ENCODE measurements at regions of chr14 and their contacts with region 1.

Region 1: GRCh38 chr14:21103710-21104447 is 3.0 kb downstream of the TMEM253 start:
- DNase-seq: peak; percentile 98
- H3K4me3 ChIP-seq: peak overlapping the region; percentile 53 to 72 (median 59)
- H3K27ac ChIP-seq: peak overlapping the region; percentile 90 to 99 (median 96)
- H3K4me1 ChIP-seq: peaks cover 0 to 58% (median 50%) of the 10 kb centered on the region in 4 donors
- H3K27me3 ChIP-seq: no peaks in the 10 kb centered on the region
- CTCF ChIP-seq: peak; percentile 74 to 88 (median 86)
- EP300 ChIP-seq: peak in 2 of 4 donors; percentile 13 to 54
- POLR2A ChIP-seq: peak; percentile 80 to 91

Region 2: DNA sequence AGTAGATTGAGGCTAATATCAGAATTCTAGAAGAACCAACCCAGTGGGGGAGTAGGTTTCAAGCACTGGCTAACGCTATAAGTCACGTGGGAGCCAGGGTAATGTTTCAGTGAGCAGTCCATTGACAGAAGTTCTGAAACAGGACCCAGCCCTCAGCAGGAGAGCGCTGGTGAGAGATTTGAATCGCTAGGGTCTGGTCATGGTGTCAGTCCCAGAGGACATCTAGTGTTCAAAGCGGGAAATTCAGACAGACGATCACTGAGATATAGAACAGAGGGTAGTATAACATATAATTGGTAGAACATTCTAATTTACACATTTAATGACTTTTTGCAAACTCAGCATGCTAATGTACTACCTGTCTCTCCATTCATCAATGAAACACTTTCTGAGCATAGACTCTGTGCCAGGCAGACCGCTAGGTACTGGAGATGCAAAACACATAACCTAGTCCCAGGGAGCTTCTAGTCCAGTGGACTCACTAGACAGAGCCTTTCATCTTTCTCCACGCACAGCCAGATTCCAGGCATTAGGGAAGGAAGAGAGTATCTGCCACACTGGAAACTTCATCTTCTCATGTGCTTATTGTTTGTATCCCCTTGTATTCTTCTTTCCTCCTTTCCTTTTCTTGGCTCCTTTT is 248.1 kb before region 1 on chr14:
- intact Hi-C with region 1: loop called (anchors 10 kb)
- DNase-seq: no peak
- H3K4me3 ChIP-seq: no peak overlapping the region
- H3K27ac ChIP-seq: no peak overlapping the region
- H3K4me1 ChIP-seq: peaks cover 0 to 6% (median 2%) of the 10 kb centered on the region in 4 donors
- H3K27me3 ChIP-seq: peaks cover 0 to 8% (median 7%) of the 10 kb centered on the region in 3 donors
- CTCF ChIP-seq: peak; percentile 26 to 55 (median 49)
- EP300 ChIP-seq: no peak
- POLR2A ChIP-seq: no peak

Region 3: GRCh38 chr14:21014761-21015190 is 89.1 kb before region 1 on chr14:
- intact Hi-C with region 1: loop called (anchors 5 kb)
- DNase-seq: peak; percentile 93
- H3K4me3 ChIP-seq: no peak overlapping the region
- H3K27ac ChIP-seq: peak overlapping the region in 1 of 4 donors; percentile 12
- H3K4me1 ChIP-seq: peaks cover 0 to 14% (median 3%) of the 10 kb centered on the region in 4 donors
- H3K27me3 ChIP-seq: no peaks in the 10 kb centered on the region
- CTCF ChIP-seq: peak; percentile 93 to 96 (median 94)
- EP300 ChIP-seq: no peak
- POLR2A ChIP-seq: no peak

Region 4: GRCh38 chr14:21071225-21072030 is 32.5 kb before region 1 on chr14:
- intact Hi-C with region 1: loop called (anchors 1 kb)
- DNase-seq: peak; percentile 94
- H3K4me3 ChIP-seq: peak overlapping the region; percentile 60 to 85 (median 64)
- H3K27ac ChIP-seq: peak overlapping the region; percentile 87 to 93 (median 88)
- H3K4me1 ChIP-seq: peaks cover 0 to 39% (median 36%) of the 10 kb centered on the region in 4 donors
- H3K27me3 ChIP-seq: no peaks in the 10 kb centered on the region
- CTCF ChIP-seq: no peak
- EP300 ChIP-seq: no peak
- POLR2A ChIP-seq: no peak

Region 5: DNA sequence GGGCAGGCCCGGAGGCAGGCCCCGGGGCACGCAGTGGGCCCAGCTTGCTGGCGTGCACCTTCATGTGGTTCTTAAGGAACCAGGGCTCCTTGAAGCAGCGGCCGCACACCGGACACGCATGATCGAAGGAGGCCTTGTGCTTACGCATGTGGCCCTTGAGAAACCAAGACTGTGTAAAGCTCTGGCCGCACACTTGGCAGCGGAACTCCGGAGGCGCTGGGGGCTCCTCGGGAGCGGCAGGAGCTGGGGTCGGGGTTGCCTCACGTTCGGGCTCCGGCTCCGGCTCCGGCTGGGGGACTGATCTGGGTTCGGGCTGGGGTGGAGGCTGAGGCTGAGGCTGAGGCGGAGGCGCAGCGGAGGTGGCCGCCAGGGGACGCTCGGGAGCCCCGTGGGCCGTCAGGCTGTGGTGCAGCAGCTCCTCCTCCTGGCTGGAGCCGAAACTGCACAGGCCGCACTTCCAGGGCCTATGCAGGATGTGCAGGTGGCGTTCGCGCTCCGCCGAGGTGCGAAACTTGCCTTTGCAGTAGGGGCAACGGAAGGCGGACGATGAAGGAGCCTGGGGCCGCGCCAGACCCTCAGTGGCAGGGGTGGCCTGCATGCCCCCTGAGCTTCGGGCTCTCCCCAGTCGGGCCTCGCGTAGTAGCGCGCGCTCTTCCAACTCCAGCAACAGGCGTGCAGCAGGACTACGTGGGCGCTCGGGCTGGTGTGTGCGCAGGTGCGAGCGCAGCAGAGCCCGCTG is 11.4 kb before region 1 on chr14:
- intact Hi-C with region 1: loop called (anchors 1 kb)
- DNase-seq: peak; percentile 91
- H3K4me3 ChIP-seq: no peak overlapping the region
- H3K27ac ChIP-seq: peak overlapping the region; percentile 39 to 58 (median 56)
- H3K4me1 ChIP-seq: peaks cover 0 to 50% (median 44%) of the 10 kb centered on the region in 4 donors
- H3K27me3 ChIP-seq: no peaks in the 10 kb centered on the region
- CTCF ChIP-seq: peak; percentile 100
- EP300 ChIP-seq: no peak
- POLR2A ChIP-seq: no peak

Measured in sigmoid colon (tissue), 7 donors.